ENCODE measurements at regions of chr7 and their contacts with region 1.

Region 1: DNA sequence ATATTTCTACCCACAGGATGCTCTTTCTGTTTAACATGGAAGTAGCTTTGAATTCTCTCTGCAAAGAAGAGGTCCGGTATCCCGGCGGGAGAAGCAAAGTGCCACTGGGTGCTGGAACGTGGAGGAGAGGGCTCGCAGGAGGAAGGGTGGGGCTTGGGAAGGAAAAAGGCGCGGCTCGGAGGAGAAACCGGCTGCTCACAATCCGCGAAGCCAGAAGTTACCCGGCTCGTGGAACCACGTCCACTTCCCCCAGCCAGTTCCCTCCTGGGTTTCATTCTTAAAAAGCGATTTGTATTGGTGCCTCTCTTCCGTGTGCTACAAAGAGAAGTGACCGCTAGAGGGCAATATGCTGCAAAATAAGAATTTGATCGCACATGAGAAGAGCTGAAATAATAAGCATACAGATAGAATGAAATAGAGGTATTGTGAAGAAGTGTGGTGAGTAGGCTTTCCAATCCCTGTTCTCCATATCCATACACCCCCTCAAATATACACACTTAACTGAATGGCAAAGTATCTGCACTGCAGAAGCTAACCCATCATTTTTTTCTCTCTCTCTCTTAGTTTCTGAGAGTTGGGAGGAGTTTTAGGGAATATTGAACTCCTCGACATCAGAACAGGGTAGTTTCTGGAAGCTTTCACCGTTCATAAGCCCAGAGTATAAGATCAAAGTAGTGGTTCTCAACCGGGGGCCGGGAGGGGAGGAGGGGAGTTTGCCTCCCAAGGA is 31.1 kb downstream of the TRIL start:
- DNase-seq: peak; percentile 68 to 90 (median 77)
- H3K4me3 ChIP-seq: peak overlapping the region in 2 of 4 donors; percentile 3 to 50
- H3K27ac ChIP-seq: peak overlapping the region in 2 of 5 donors; percentile 52 to 54
- H3K4me1 ChIP-seq: peaks cover 0 to 10% of the 10 kb centered on the region in 2 donors
- H3K27me3 ChIP-seq: no peaks in the 10 kb centered on the region
- CTCF ChIP-seq: peak; percentile 77 to 86 (median 78)
- POLR2A ChIP-seq: no peak

Region 2: GRCh38 chr7:29408841-29409243 is 481.8 kb after region 1 on chr7:
- intact Hi-C with region 1: loop called (anchors 5 to 10 kb)
- DNase-seq: peak; percentile 40 to 81 (median 70)
- H3K4me3 ChIP-seq: no peak overlapping the region
- H3K27ac ChIP-seq: no peak overlapping the region
- H3K4me1 ChIP-seq: no peaks in the 10 kb centered on the region
- H3K27me3 ChIP-seq: no peaks in the 10 kb centered on the region
- CTCF ChIP-seq: peak; percentile 81 to 94 (median 89)
- POLR2A ChIP-seq: no peak